ENCODE measurements at regions of chr4 and their contacts with region 1.

Region 1: GRCh38 chr4:99808260-99808857 is 8.3 kb upstream of the DAPP1 start:
- DNase-seq: no peak
- H3K4me3 ChIP-seq: no peak overlapping the region
- CTCF ChIP-seq: no peak
- POLR2A ChIP-seq: no peak

Region 2: GRCh38 chr4:99563310-99564186 is 244.8 kb before region 1 on chr4 and contains the start of gene TRMT10A:
- intact Hi-C with region 1: loop called (anchors 5 kb)
- DNase-seq: peak; percentile 96 to 99
- H3K4me3 ChIP-seq: peak within 1 kb of the TSS; percentile 31
- CTCF ChIP-seq: no peak
- POLR2A ChIP-seq: no peak
- total RNA-seq, gene TRMT10A: 1.3 to 9.0 (median 4.7) TPM

Region 3: GRCh38 chr4:99573735-99574368 is 234.5 kb before region 1 on chr4:
- intact Hi-C with region 1: no loop called
- DNase-seq: no peak
- H3K4me3 ChIP-seq: no peak overlapping the region
- CTCF ChIP-seq: no peak
- POLR2A ChIP-seq: no peak

Region 4: GRCh38 chr4:99885063-99885664 is 76.8 kb after region 1 on chr4:
- intact Hi-C with region 1: no loop called
- DNase-seq: no peak
- H3K4me3 ChIP-seq: no peak overlapping the region
- CTCF ChIP-seq: no peak
- POLR2A ChIP-seq: no peak

Region 5: DNA sequence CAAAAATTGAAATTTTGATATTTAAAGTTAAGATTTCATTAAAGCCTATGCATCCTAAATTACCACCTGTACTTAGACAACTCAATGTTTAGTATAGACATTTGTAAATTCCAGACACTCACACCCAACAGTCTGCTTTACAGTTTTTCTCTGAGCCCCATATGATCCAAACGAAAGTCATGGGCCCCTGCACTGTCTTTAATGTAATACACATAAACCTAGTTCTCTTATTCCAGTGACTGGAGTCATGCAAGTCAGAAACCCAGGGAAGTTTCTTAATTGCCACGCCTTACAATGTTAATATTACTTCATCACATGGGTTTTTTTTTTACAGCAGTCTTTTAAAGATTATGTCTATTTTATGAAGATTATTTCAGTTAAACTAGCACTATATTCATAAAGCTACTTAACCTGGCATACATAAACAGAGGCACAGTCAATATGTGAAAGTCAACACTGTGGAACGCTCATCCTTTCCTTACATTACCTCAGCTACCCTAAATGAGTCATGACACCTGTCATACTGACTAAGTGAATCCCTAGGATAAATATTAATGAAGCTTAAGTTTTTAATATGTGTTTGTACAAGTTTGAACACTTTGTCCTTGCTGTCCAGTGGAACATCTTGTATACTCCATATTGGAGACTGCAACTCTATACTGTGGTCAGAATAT is 209.4 kb after region 1 on chr4:
- intact Hi-C with region 1: no loop called
- DNase-seq: no peak
- H3K4me3 ChIP-seq: no peak overlapping the region
- CTCF ChIP-seq: no peak
- POLR2A ChIP-seq: no peak